Panc1 (cell line): ENCODE measurements at regions of chr22 and their contacts with region 1.

Region 1: DNA sequence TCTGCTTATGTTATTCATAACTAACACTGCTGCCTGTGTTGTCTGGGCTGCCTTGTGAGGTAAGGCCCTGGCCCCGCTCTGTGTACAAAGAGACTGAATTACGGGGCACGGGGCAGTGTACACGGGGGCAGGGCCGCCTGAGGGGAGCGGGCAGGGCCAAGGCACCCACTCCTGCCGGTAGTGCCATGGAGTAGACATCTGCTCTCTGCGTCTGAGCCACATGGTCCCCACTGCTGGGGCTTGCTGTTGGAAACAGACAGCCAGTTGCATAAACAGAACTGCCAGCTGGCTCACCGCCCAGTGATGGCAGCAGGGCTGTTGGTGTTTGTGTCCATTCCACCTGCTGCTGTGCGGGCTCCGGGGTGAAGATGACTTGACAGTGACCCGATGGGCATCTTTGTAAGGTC is 19.8 kb downstream of the FAM118A start:
- DNase-seq: no peak
- ATAC-seq: no peak
- H3K4me3 ChIP-seq: no peak overlapping the region
- H3K27ac ChIP-seq: no peak overlapping the region
- H3K4me1 ChIP-seq: no peaks in the 10 kb centered on the region
- H3K27me3 ChIP-seq: no peaks in the 10 kb centered on the region
- CTCF ChIP-seq: no peak

Region 2: GRCh38 chr22:45226527-45227186 is 102.9 kb before region 1 on chr22:
- CTCF ChIA-PET with region 1: no interaction called
- POLR2A ChIA-PET with region 1: no interaction called
- in situ Hi-C with region 1: no loop called
- intact Hi-C with region 1: no loop called
- DNase-seq: no peak
- ATAC-seq: no peak; the same call in 1 of the 2 replicates
- H3K4me3 ChIP-seq: no peak overlapping the region
- H3K27ac ChIP-seq: no peak overlapping the region
- H3K4me1 ChIP-seq: no peaks in the 10 kb centered on the region; the same call in 1 of the 2 replicates
- H3K27me3 ChIP-seq: no peaks in the 10 kb centered on the region
- CTCF ChIP-seq: no peak

Region 3: GRCh38 chr22:45376703-45377102 is 47.2 kb after region 1 on chr22:
- CTCF ChIA-PET with region 1: no interaction called
- POLR2A ChIA-PET with region 1: no interaction called
- in situ Hi-C with region 1: no loop called
- intact Hi-C with region 1: no loop called
- DNase-seq: no peak
- ATAC-seq: no peak
- H3K4me3 ChIP-seq: no peak overlapping the region
- H3K27ac ChIP-seq: no peak overlapping the region
- H3K4me1 ChIP-seq: no peaks in the 10 kb centered on the region
- H3K27me3 ChIP-seq: no peaks in the 10 kb centered on the region
- CTCF ChIP-seq: no peak

Region 4: GRCh38 chr22:45389521-45389920 is 60.0 kb after region 1 on chr22:
- CTCF ChIA-PET with region 1: no interaction called
- POLR2A ChIA-PET with region 1: interaction called, 12 read pairs
- in situ Hi-C with region 1: no loop called
- intact Hi-C with region 1: no loop called
- DNase-seq: no peak
- ATAC-seq: no peak
- H3K4me3 ChIP-seq: no peak overlapping the region
- H3K27ac ChIP-seq: no peak overlapping the region
- H3K4me1 ChIP-seq: no peaks in the 10 kb centered on the region
- H3K27me3 ChIP-seq: peaks cover 4% of the 10 kb centered on the region; the same call in 1 of the 2 replicates
- CTCF ChIP-seq: no peak

Region 5: DNA sequence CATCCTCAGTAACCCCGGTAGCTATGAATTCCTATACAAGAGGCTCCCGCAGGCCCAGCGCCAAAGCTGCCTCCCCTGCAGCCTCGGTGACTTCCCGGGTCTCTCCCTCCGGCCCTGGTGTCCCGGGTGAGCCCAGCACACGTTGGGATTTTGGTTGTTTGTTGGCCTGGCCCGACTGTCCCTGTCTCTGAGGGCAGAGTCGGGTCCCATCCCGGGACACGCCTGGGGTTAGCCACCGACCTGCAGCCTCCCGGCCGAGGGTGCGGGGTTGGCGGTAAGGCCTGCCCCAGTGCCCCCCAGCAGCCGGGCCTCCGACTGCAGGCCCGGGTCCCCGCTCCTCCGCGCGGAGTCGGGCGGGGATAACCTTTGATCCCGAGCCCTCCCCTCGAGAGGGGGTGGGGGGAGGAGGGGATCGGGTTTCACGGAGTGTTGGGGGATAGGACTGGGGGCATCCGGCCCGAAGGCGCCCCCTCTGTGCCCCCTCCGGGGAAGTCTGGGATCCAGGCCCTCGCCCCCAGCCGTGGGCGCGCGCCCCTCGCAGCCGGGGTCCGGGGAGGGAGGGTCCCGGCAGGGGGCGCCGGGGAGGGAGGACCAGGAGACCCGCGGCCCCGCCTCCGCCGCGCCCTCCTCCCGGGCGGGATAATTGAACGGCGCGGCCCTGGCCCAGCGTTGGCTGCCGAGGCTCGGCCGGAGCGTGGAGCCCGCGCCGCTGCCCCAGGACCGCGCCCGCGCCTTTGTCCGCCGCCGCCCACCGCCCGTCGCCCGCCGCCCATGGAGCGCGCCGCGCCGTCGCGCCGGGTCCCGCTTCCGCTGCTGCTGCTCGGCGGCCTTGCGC is 172.9 kb after region 1 on chr22 and contains the start of gene FBLN1:
- CTCF ChIA-PET with region 1: interaction called, 10 read pairs
- POLR2A ChIA-PET with region 1: no interaction called
- in situ Hi-C with region 1: no loop called
- intact Hi-C with region 1: no loop called
- DNase-seq: no peak
- ATAC-seq: peak; percentile 85
- H3K4me3 ChIP-seq: peak within 1 kb of the TSS; percentile 57 to 58
- H3K27ac ChIP-seq: peak within 1 kb of the TSS; percentile 84
- H3K4me1 ChIP-seq: peaks cover 5% of the 10 kb centered on the region
- H3K27me3 ChIP-seq: no peaks in the 10 kb centered on the region
- CTCF ChIP-seq: no peak; the same call in 1 of the 2 replicates
- total RNA-seq, gene FBLN1: 143 TPM